ENCODE measurements at regions of chr17 and their contacts with region 1.

Region 1: DNA sequence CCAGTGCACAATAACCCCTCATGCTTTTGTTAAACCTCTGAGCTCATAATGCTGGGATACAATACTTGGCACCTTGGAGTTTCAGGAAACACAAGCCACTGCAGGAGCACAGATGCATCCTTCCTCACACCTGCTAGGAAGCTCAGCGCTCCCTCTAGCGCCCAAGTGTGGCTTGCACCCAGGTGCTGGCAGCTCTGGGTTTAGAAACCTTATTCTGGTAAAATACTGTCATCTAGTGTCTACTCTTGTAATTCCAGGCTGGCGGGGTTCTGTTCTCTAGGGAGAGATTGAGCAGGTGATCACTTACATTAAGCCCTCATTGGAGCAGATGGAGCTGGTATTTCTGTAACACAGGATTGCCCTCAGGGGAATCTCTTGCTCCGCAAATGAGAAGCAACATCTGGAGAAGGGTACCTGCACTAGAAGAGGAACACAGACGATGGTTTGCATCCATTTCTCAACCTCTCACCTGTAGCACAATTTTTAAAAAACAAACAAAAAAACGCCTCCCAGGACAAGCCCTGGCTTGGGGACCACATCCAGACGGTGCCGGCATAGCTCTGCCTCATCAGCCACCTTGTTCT is 1.5 kb downstream of the CCL1 start:
- DNase-seq: peak; percentile 82
- H3K4me3 ChIP-seq: no peak overlapping the region; a peak in 1 of 4 replicates
- H3K27ac ChIP-seq: no peak overlapping the region
- H3K4me1 ChIP-seq: no peaks in the 10 kb centered on the region
- H3K27me3 ChIP-seq: no peaks in the 10 kb centered on the region; the same call in 1 of the 2 replicates
- CTCF ChIP-seq: peak; percentile 100
- EP300 ChIP-seq: no peak
- RAD21 ChIP-seq: peak; percentile 100

Region 2: DNA sequence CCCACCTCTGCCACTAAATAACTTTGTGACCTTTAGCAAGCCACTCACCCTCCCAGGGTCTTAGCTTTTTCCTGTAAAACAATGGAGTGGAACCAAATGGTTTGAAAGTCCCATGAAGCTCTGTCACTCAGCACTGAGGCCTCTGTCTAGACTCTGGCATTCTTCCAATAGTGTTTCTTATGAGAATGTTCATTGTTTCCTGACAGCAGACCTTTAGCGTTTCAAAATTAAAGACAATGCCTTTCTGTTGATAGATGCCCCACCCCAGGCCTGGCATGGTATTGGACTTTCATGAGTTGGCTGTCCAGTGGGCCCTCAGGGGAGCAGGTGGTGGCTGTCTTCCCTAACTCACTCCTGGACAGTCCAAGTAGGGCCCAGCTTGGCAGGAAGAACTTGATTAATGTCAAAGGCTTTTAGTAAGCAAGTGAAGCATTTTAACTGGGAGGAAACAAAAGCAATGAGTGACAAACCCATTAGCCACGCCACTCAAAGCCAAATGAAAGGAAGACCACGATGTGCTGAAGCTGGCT is 293.0 kb before region 1 on chr17:
- CTCF ChIA-PET with region 1: no interaction called
- POLR2A ChIA-PET with region 1: no interaction called
- DNase-seq: no peak
- H3K4me3 ChIP-seq: no peak overlapping the region
- H3K27ac ChIP-seq: no peak overlapping the region
- H3K4me1 ChIP-seq: no peaks in the 10 kb centered on the region
- H3K27me3 ChIP-seq: no peaks in the 10 kb centered on the region
- CTCF ChIP-seq: no peak
- EP300 ChIP-seq: no peak
- RAD21 ChIP-seq: no peak

Region 3: GRCh38 chr17:34156741-34157589 is 204.6 kb before region 1 on chr17:
- CTCF ChIA-PET with region 1: interaction called, 15 read pairs
- POLR2A ChIA-PET with region 1: no interaction called
- DNase-seq: peak; percentile 74
- H3K4me3 ChIP-seq: peak overlapping the region in 1 of 2 experiments; percentile 31; a peak in 1 of 4 replicates
- H3K27ac ChIP-seq: no peak overlapping the region
- H3K4me1 ChIP-seq: peaks cover 0 to 3% of the 10 kb centered on the region in 2 experiments; a peak in 1 of 4 replicates
- H3K27me3 ChIP-seq: no peaks in the 10 kb centered on the region
- CTCF ChIP-seq: no peak
- EP300 ChIP-seq: no peak
- RAD21 ChIP-seq: no peak

Region 4: DNA sequence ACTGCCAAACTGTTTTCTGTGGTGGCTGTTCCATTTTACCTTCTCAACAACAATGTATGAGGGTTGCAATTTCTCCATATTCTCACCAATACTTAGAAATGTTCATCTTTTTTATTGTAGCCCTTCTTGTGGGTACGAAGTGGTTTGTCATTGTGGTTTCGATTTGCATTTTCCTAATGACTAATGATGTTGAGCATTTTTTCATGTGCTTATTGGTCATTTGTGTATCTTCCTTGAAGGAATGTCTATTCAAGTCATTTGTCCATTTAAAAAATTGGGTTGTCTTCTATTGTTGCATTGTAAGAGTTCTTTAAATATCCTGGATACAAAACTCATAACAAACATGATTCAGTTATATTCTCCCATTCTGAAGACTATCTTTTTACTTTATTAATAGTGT is 154.0 kb before region 1 on chr17:
- CTCF ChIA-PET with region 1: interaction called, 350 read pairs
- POLR2A ChIA-PET with region 1: no interaction called
- DNase-seq: no peak
- H3K4me3 ChIP-seq: no peak overlapping the region
- H3K27ac ChIP-seq: no peak overlapping the region
- H3K4me1 ChIP-seq: no peaks in the 10 kb centered on the region
- H3K27me3 ChIP-seq: no peaks in the 10 kb centered on the region
- CTCF ChIP-seq: no peak
- EP300 ChIP-seq: no peak
- RAD21 ChIP-seq: no peak

Region 5: DNA sequence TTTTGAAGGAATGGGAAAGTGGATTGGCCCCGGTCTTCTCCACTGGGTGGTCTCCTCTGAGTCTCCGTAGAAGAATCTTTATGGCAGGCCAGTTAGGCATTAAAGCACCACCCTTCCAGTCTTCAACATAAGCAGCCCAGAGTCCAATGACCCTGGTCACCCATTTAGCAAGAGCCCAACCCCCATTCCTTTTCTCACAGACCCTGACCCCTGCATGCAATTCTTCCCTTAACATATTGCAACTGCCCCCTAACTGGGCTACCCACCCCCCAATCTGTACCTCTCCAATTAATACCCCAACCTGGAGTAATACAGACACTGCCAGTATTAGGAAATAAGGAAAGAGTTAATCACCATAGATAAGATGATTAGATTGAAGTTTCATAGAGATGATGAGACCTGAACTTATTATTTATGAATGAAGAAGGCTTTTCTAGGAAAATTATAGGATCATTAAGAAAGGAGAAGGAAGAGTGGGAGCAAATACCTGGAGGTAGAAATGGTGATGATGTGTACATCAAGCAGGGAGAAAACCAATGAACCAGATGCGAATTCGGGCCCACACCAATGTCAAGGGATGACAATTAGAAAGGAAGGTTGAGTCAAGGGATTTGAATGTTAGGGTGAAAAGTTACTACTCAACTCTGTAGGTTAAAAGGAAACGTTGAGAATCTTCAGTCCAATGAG is 104.1 kb before region 1 on chr17:
- CTCF ChIA-PET with region 1: interaction called, 10 read pairs
- POLR2A ChIA-PET with region 1: no interaction called
- DNase-seq: no peak
- H3K4me3 ChIP-seq: peak overlapping the region in 1 of 2 experiments; percentile 2; a peak in 1 of 4 replicates
- H3K27ac ChIP-seq: no peak overlapping the region
- H3K4me1 ChIP-seq: peaks cover 16 to 21% of the 10 kb centered on the region in 2 experiments
- H3K27me3 ChIP-seq: no peaks in the 10 kb centered on the region
- CTCF ChIP-seq: no peak
- EP300 ChIP-seq: no peak
- RAD21 ChIP-seq: no peak

Region 6: DNA sequence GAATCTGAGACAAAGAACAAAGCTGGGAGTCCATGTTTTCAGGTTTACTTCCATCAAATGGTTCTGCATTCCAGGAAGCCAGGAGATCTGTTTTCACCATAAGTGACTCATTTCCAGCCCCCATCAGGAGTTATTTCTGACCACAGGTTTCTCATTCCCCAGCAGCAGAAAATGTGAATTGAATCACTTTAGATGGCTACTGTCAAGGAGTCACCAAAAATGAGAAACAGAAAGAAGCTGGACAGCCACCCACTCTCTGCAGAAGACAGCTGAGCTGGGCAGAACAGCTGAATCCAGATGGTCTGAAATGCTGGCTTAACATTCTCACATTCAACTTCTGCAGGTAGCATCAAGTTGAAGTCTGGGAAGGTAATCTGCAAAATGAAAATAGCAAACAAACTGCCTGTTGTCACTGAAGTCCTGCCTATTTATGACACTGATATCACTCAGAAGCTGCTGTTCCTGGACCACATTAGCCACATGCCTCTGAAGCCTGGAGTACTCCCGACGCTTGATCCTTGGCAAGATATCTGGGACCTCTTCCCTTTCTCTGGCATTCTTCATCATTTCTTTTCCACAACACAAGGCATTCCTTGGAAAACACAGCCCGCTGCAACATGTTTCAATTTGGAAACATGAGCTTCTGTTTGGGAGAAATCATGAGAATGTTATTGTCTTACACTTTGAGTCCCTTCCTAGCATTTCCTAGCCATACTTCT is 60.8 kb before region 1 on chr17:
- CTCF ChIA-PET with region 1: interaction called, 17 read pairs
- POLR2A ChIA-PET with region 1: no interaction called
- DNase-seq: no peak
- H3K4me3 ChIP-seq: no peak overlapping the region
- H3K27ac ChIP-seq: peak overlapping the region; percentile 22 to 38; a peak in 3 of 4 replicates
- H3K4me1 ChIP-seq: peaks cover 0 to 20% of the 10 kb centered on the region in 2 experiments; a peak in 2 of 4 replicates
- H3K27me3 ChIP-seq: no peaks in the 10 kb centered on the region
- CTCF ChIP-seq: no peak
- EP300 ChIP-seq: peak in 1 of 2 experiments; percentile 41; a peak in 2 of 4 replicates
- RAD21 ChIP-seq: no peak

Region 7: GRCh38 chr17:34347063-34347462 is 14.5 kb before region 1 on chr17:
- CTCF ChIA-PET with region 1: interaction called, 48 read pairs
- POLR2A ChIA-PET with region 1: no interaction called
- DNase-seq: no peak
- H3K4me3 ChIP-seq: no peak overlapping the region
- H3K27ac ChIP-seq: no peak overlapping the region
- H3K4me1 ChIP-seq: no peaks in the 10 kb centered on the region
- H3K27me3 ChIP-seq: no peaks in the 10 kb centered on the region
- CTCF ChIP-seq: no peak
- EP300 ChIP-seq: no peak
- RAD21 ChIP-seq: no peak

Region 8: DNA sequence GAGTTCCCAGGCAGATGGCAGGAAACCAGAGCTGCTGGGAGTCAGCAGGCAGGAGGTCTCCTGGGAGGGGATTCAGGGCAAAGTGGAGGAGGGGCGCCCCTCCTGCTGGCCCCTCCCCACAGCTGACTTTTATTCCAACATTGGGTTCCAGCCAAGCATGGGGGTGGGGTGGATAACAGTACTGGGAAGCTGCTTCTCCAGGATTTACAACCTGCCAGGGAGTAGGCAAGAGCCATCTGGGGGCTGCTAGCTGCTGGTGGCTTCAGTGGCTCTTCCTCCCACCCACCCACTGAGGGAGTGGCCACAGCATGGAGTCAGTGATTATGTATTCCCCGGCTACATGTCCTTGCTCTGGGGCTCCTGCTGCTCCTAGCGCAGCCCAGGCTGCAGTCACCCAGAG is 254.6 kb after region 1 on chr17:
- CTCF ChIA-PET with region 1: no interaction called
- POLR2A ChIA-PET with region 1: no interaction called
- DNase-seq: peak; percentile 66
- H3K4me3 ChIP-seq: no peak overlapping the region
- H3K27ac ChIP-seq: no peak overlapping the region
- H3K4me1 ChIP-seq: peaks cover 0 to 61% of the 10 kb centered on the region in 2 experiments; a peak in 2 of 4 replicates
- H3K27me3 ChIP-seq: no peaks in the 10 kb centered on the region
- CTCF ChIP-seq: no peak
- EP300 ChIP-seq: peak in 1 of 2 experiments; percentile 50; a peak in 2 of 4 replicates
- RAD21 ChIP-seq: 0 out of 2 replicates have a peak, but pooled peaks have one; percentile 2